Activated CD4-positive, alpha-beta T cell treated with anti-CD3 and anti-CD28 coated beads for 36 hours (primary cell): ENCODE measurements at regions of chr2 and their contacts with region 1.

Region 1: DNA sequence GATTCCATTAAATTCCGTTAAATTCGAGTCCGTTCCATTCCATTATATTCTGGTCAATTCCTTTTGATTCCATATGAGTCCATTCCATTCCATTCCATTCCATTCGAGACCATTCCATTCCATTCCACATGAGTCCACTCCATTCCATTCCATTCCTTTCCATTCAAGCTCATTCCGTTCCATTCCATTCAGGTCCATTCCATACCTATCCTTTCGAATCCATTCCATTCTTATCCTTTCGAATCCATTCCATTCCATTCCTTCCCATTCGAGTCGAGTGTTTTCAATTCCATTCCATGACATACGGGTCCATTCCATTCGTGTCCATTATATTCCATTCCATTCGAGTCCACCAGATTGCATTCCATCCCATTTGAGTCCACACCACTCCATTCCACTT is 1127.4 kb downstream of the RPIA start:
- DNase-seq: no peak
- ATAC-seq: no peak
- H3K4me3 Mint-ChIP-seq: no peak overlapping the region
- H3K27ac Mint-ChIP-seq: no peak overlapping the region
- H3K4me1 Mint-ChIP-seq: no peaks in the 10 kb centered on the region
- H3K27me3 Mint-ChIP-seq: no peaks in the 10 kb centered on the region

Region 2: GRCh38 chr2:89780302-89780701 is 38.6 kb before region 1 on chr2:
- CTCF ChIA-PET with region 1: no interaction called
- POLR2A ChIA-PET with region 1: no interaction called
- intact Hi-C with region 1: loop called in 1 of 2 experiments (anchors 5 kb)
- DNase-seq: no peak
- ATAC-seq: no peak
- H3K4me3 Mint-ChIP-seq: no peak overlapping the region
- H3K27ac Mint-ChIP-seq: no peak overlapping the region
- H3K4me1 Mint-ChIP-seq: no peaks in the 10 kb centered on the region
- H3K27me3 Mint-ChIP-seq: no peaks in the 10 kb centered on the region

Region 3: GRCh38 chr2:89792626-89793025 is 26.2 kb before region 1 on chr2:
- CTCF ChIA-PET with region 1: no interaction called
- POLR2A ChIA-PET with region 1: no interaction called
- intact Hi-C with region 1: no loop called
- DNase-seq: no peak
- ATAC-seq: no peak
- H3K4me3 Mint-ChIP-seq: no peak overlapping the region
- H3K27ac Mint-ChIP-seq: no peak overlapping the region
- H3K4me1 Mint-ChIP-seq: no peaks in the 10 kb centered on the region
- H3K27me3 Mint-ChIP-seq: no peaks in the 10 kb centered on the region

Region 4: DNA sequence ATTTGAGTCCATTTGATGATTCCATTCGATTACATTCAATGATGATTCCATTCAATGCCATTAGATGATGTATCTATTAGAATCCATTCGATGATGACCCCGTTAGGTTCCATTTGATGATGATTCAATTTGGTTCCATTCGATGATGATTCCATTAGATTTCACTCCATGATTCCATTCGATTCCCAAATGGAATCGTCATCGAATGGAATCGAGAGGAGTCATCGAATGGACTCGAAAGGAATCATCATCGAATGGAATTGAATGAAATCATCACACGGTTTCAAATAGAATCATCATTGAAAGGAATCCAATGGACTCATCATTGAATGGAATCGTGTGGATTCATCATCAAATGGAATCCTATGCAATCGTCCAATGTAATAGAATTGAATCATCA is 16.1 kb before region 1 on chr2:
- CTCF ChIA-PET with region 1: no interaction called
- POLR2A ChIA-PET with region 1: no interaction called
- intact Hi-C with region 1: no loop called
- DNase-seq: no peak
- ATAC-seq: no peak
- H3K4me3 Mint-ChIP-seq: no peak overlapping the region
- H3K27ac Mint-ChIP-seq: no peak overlapping the region
- H3K4me1 Mint-ChIP-seq: no peaks in the 10 kb centered on the region
- H3K27me3 Mint-ChIP-seq: no peaks in the 10 kb centered on the region

Region 5: GRCh38 chr2:89833116-89833779 is 14.4 kb after region 1 on chr2:
- CTCF ChIA-PET with region 1: no interaction called
- POLR2A ChIA-PET with region 1: no interaction called
- intact Hi-C with region 1: loop called in 1 of 2 experiments (anchors 2 kb)
- DNase-seq: no peak
- ATAC-seq: peak; percentile 36
- H3K4me3 Mint-ChIP-seq: no peak overlapping the region
- H3K27ac Mint-ChIP-seq: no peak overlapping the region
- H3K4me1 Mint-ChIP-seq: no peaks in the 10 kb centered on the region
- H3K27me3 Mint-ChIP-seq: no peaks in the 10 kb centered on the region

Region 6: GRCh38 chr2:90207454-90208058 is 388.7 kb after region 1 on chr2:
- CTCF ChIA-PET with region 1: no interaction called
- POLR2A ChIA-PET with region 1: no interaction called
- intact Hi-C with region 1: no loop called
- DNase-seq: peak; percentile 8
- ATAC-seq: no peak
- H3K4me3 Mint-ChIP-seq: no peak overlapping the region
- H3K27ac Mint-ChIP-seq: no peak overlapping the region
- H3K4me1 Mint-ChIP-seq: no peaks in the 10 kb centered on the region
- H3K27me3 Mint-ChIP-seq: peaks cover 2% of the 10 kb centered on the region